Adrenal gland (tissue), 19 donors: ENCODE measurements at regions of chr1 and their contacts with region 1.

Region 1: GRCh38 chr1:206030714-206031113 is 7.0 kb upstream of the CTSE start:
- DNase-seq: peak; percentile 55 to 80 (median 72)
- H3K4me3 ChIP-seq: no peak overlapping the region
- H3K27ac ChIP-seq: no peak overlapping the region
- H3K4me1 ChIP-seq: peaks cover 0 to 7% of the 10 kb centered on the region in 2 donors
- H3K27me3 ChIP-seq: peaks cover 28% of the 10 kb centered on the region
- CTCF ChIP-seq: peak; percentile 68 to 73 (median 72)
- POLR2A ChIP-seq: no peak

Region 2: GRCh38 chr1:205812878-205813754 is 217.6 kb before region 1 on chr1 and contains the start of gene SLC41A1:
- intact Hi-C with region 1: no loop called
- DNase-seq: peak; percentile 93 to 98 (median 96)
- H3K4me3 ChIP-seq: peak within 1 kb of the TSS; percentile 61 to 93 (median 84)
- H3K27ac ChIP-seq: peak within 1 kb of the TSS; percentile 52 to 91 (median 79)
- H3K4me1 ChIP-seq: peaks cover 23 to 50% of the 10 kb centered on the region in 2 donors
- H3K27me3 ChIP-seq: no peaks in the 10 kb centered on the region
- CTCF ChIP-seq: no peak
- POLR2A ChIP-seq: peak; percentile 18 to 81
- total RNA-seq, gene SLC41A1: 21.3 to 127 (median 34.4) TPM

Region 3: DNA sequence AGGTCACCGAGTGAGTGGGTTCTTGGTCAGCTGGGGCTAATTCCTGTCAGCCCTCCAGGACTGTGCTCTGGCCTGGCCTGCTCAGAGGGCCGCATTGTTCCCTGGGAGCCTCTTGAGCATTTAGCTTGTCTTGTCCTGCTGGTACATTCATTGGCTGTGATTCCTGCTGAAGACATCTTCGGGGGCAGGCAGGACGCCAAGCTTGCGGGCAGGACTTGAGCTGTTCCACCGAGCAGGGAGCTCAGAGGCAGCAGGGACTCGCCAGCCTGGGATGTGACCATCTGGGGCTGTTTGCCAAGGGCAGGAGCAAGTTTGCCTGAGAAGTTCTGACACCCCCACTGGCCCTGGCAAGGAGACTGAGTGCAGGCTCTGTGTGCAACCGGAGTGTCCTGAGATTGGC is 80.4 kb before region 1 on chr1:
- intact Hi-C with region 1: no loop called
- DNase-seq: peak in 3 of 7 donors; percentile 11 to 31 (median 13)
- H3K4me3 ChIP-seq: no peak overlapping the region
- H3K27ac ChIP-seq: no peak overlapping the region
- H3K4me1 ChIP-seq: no peaks in the 10 kb centered on the region
- H3K27me3 ChIP-seq: no peaks in the 10 kb centered on the region
- CTCF ChIP-seq: no peak
- POLR2A ChIP-seq: no peak

Region 4: GRCh38 chr1:206117151-206117948 is 86.6 kb after region 1 on chr1 and contains the start of gene AVPR1B:
- intact Hi-C with region 1: loop called in 1 of 2 experiments (anchors 5 kb)
- DNase-seq: peak in 4 of 7 donors; percentile 25 to 48 (median 44)
- H3K4me3 ChIP-seq: peak within 1 kb of the TSS in 2 of 4 donors; percentile 1 to 48
- H3K27ac ChIP-seq: no peak within 1 kb of the TSS
- H3K4me1 ChIP-seq: peaks cover 0 to 10% of the 10 kb centered on the region in 2 donors
- H3K27me3 ChIP-seq: peaks cover 6% of the 10 kb centered on the region
- CTCF ChIP-seq: no peak
- POLR2A ChIP-seq: no peak
- total RNA-seq, gene AVPR1B: not detected